GM23248 (cell line): ENCODE measurements at regions of chr1 and their contacts with region 1.

Region 1: DNA sequence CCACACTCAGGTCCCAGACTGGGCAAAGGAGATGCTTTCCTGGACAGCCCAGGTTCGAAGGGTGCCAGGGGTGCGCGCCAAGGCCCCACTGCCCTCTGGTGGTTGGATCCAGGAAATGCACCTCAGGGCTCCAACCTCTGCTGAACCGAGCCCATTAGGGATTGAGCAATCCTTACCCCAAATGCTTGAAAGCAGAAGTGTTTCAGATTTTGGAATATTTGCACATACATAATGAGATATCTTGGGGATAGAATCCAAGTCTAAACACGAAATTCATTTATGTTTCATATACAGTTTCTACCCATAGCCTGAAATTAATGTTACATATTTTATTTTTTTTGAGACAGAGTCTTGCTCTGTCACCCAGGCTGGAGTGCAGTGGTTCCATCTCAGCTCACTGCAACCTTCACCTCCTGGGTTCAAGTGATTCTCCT is 57.4 kb downstream of the SLC9A1 start:
- DNase-seq: peak; percentile 86
- H3K4me3 ChIP-seq: no peak overlapping the region
- H3K27ac ChIP-seq: peak overlapping the region; percentile 95
- H3K4me1 ChIP-seq: peaks cover 30% of the 10 kb centered on the region
- H3K27me3 ChIP-seq: no peaks in the 10 kb centered on the region

Region 2: DNA sequence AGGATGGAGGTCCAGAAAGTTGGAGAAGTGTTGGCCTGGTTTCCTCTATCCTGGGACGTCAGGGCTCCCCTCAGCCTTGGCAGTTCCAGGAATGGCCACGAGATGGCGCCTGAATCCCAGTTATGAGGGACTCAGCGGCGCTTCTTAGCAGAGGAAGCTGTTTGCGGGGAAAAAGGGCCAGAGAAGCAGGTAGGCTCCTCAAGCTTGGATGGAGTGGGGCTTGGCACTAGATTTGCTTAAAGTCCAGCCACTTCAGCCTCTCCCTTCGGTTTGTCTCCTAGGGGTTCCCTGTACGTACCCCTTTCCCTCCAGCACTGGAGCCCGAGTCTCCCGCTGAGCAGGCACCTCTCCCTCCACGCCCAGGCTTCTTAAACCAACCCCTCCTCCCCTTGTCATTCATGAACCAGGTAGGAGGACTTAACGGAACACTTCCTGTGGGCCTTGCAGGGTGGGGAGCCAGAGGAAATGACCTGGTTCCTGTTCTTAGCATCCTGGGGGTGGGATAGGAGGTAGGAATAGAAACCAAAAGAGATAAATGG is 52.8 kb before region 1 on chr1:
- in situ Hi-C with region 1: loop called (anchors 5 kb)
- DNase-seq: peak; percentile 88
- H3K4me3 ChIP-seq: no peak overlapping the region
- H3K27ac ChIP-seq: no peak overlapping the region
- H3K4me1 ChIP-seq: peaks cover 8% of the 10 kb centered on the region
- H3K27me3 ChIP-seq: no peaks in the 10 kb centered on the region